Tibial artery (tissue), 4 donors: ENCODE measurements at regions of chr4 and their contacts with region 1.

Region 1: DNA sequence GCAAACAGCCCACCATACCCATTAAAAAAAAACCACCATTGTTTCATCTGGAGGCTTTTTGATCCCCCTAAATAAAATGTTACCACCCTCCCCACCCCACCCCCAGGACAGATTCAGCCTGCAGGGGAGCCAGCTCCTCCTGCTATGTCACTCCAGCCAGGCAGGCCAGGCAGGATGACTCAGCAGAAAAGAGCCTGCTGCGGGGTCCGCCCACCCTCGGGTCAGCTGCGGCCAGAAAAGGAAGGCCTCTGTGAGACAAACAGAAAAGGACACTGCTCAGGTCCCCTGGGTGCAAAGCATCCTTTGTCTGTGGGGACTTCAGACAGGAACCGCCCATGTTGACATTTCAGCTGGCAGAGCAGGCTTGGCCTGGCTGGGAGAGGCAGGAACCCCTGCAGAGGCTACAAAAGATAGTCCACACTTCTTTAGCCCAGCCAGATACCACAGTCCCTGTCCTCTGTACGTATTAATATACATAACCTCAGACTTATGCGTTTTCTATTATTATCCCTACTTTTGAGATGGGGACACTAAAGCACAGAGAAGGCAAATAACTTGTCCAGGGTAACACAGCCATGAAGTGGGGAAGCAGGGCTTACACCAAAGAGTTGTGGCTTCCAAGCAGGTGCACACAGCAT is 147.7 kb downstream of the CPEB2 start:
- DNase-seq: peak; percentile 78 to 89
- H3K4me3 ChIP-seq: no peak overlapping the region
- H3K27ac ChIP-seq: peak overlapping the region; percentile 8 to 73
- H3K4me1 ChIP-seq: peaks cover 0 to 25% (median 15%) of the 10 kb centered on the region in 4 donors
- H3K27me3 ChIP-seq: no peaks in the 10 kb centered on the region
- CTCF ChIP-seq: peak in 1 of 2 experiments; percentile 23

Region 2: GRCh38 chr4:14994241-14994640 is 155.7 kb before region 1 on chr4:
- intact Hi-C with region 1: loop called (anchors 10 kb)
- DNase-seq: no peak
- H3K4me3 ChIP-seq: no peak overlapping the region
- H3K27ac ChIP-seq: no peak overlapping the region
- H3K4me1 ChIP-seq: no peaks in the 10 kb centered on the region
- H3K27me3 ChIP-seq: no peaks in the 10 kb centered on the region
- CTCF ChIP-seq: no peak

Region 3: GRCh38 chr4:15054541-15054940 is 95.4 kb before region 1 on chr4:
- intact Hi-C with region 1: no loop called
- DNase-seq: no peak
- H3K4me3 ChIP-seq: no peak overlapping the region
- H3K27ac ChIP-seq: no peak overlapping the region
- H3K4me1 ChIP-seq: peaks cover 0 to 9% (median 4%) of the 10 kb centered on the region in 4 donors
- H3K27me3 ChIP-seq: no peaks in the 10 kb centered on the region
- CTCF ChIP-seq: no peak

Region 4: DNA sequence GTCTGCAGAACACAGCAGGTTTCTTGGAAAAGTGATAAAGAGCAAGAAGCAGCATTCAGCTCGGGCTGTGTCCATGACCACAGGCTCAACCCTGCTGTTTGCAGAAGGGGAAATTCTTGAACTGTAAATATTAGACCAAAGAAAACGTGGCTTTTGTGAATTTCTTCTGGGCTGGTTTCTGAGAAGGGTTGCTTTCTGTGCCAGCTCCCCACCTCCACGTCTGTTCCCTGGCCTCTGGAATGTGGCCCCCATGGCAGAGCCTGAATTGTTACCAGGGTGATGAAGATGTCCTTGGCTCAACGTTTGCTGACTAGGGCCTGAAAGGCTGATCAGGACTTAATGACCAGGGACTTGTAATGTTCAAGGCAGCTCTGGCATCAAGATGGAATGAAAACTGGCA is 31.7 kb before region 1 on chr4:
- intact Hi-C with region 1: loop called (anchors 2 kb)
- DNase-seq: no peak
- H3K4me3 ChIP-seq: no peak overlapping the region
- H3K27ac ChIP-seq: no peak overlapping the region
- H3K4me1 ChIP-seq: no peaks in the 10 kb centered on the region
- H3K27me3 ChIP-seq: no peaks in the 10 kb centered on the region
- CTCF ChIP-seq: no peak

Region 5: DNA sequence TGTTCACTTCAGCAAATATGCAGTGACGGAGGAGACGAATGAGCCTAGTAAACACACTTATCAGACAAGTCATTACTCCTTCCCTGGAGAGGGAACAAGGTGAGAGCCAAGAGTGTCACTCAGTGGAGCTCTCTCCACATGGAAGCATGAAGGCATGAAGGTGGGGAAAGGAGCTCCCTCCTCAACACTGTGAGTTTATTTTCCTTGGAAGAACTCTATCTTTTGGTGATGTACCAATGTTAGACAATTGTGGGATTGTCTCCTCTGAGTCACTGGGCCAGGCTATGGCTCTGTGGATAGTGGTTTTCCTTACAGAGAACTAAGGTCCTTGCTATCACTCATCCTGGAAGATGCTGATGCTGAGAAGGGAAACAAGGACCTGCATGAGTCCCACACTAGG is 52.5 kb after region 1 on chr4:
- intact Hi-C with region 1: no loop called
- DNase-seq: no peak
- H3K4me3 ChIP-seq: no peak overlapping the region
- H3K27ac ChIP-seq: no peak overlapping the region
- H3K4me1 ChIP-seq: peaks cover 0 to 29% (median 2%) of the 10 kb centered on the region in 4 donors
- H3K27me3 ChIP-seq: no peaks in the 10 kb centered on the region
- CTCF ChIP-seq: no peak